Calu3 (cell line): ENCODE measurements at regions of chr3 and their contacts with region 1.

Region 1: GRCh38 chr3:57169872-57170623 is 4.9 kb upstream of the IL17RD start:
- DNase-seq: peak; percentile 87
- H3K4me3 Mint-ChIP-seq: peak overlapping the region; percentile 56
- H3K27ac Mint-ChIP-seq: no peak overlapping the region
- H3K4me1 Mint-ChIP-seq: peaks cover 26% of the 10 kb centered on the region
- H3K27me3 Mint-ChIP-seq: peaks cover 14% of the 10 kb centered on the region
- CTCF ChIP-seq: peak; percentile 76

Region 2: DNA sequence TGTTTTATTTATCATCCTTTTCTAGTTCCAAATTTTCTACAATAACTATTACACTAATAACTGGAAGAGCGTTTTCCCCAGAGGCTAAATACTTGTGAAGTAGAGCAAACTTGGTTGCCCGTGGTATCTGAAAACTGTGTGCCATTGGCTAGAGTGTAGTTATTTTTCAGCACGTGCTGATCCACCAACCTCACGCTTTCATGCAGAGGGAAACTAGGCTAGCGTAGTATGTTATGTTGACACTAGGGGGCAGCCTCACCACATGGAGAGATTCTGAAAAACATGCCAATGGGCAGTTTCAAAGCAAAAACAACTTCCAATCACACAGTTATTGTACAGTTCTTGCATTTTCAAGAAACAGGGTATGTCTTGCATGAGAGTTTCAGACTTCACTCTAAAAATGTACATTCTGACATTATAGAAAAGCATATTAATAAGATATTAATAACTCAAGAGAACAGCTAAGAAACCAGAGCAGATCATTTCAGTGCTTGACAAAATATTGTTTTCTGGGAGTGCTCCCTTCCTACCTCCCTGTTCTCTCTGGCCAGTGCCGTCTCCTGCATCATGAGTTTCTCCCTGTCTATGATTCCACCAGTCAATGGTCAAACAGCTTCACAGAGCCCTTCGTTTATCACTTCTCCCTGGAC is 69.9 kb before region 1 on chr3:
- CTCF ChIA-PET with region 1: interaction called, 3 read pairs
- intact Hi-C with region 1: loop called (anchors 5 kb)
- DNase-seq: peak; percentile 79
- H3K4me3 Mint-ChIP-seq: no peak overlapping the region
- H3K27ac Mint-ChIP-seq: no peak overlapping the region
- H3K4me1 Mint-ChIP-seq: peaks cover 17% of the 10 kb centered on the region
- H3K27me3 Mint-ChIP-seq: no peaks in the 10 kb centered on the region
- CTCF ChIP-seq: peak; percentile 82

Region 3: DNA sequence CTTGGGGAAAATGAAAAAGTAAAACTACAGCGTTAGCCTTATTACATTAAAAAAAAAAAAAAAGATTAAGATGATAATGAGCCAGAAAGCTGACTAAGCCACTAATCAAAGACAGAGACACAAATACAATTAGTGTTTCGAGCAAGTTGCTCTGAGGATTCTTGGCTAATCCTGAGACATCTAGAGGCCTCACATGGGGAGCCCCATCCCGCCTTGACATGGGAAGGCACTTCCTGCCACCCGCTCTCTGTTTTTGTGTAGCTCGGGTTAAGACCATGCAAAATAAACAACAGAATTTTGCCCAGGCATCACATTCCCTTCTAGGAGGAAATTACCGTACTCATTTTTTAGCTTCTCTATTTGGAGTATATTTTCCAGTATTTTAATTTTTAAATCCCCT is 14.5 kb after region 1 on chr3:
- CTCF ChIA-PET with region 1: no interaction called
- intact Hi-C with region 1: no loop called
- DNase-seq: no peak
- H3K4me3 Mint-ChIP-seq: no peak overlapping the region
- H3K27ac Mint-ChIP-seq: no peak overlapping the region
- H3K4me1 Mint-ChIP-seq: no peaks in the 10 kb centered on the region
- H3K27me3 Mint-ChIP-seq: no peaks in the 10 kb centered on the region
- CTCF ChIP-seq: no peak